BJ (cell line): ENCODE measurements at regions of chr11 and their contacts with region 1.

Region 1: DNA sequence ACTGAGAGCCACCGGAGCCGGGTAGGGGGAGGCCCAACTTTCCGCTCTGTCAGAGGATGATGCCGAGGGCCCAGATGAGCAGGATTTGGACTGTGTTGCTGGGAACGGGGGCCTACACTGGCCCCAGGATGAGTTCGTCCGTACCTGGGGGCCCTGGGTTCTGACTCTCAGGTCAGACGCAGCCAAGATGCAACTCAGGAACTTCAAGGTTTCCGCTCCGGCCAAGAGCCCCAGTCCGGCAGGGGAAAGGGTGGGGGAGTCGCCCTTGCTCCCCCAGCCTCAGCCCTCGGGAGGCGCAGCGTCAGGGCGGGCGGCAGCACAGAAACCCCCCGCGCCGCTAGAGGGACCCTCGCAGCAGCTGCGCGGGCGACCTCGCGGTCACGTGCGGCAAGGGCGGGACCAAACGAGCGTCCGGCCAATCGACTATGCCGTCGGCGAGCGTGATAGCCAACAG is 241 bp upstream of the ARL2 start:
- DNase-seq: no peak
- H3K4me3 ChIP-seq: peak overlapping the region; percentile 93
- H3K27me3 ChIP-seq: no peaks in the 10 kb centered on the region
- CTCF ChIP-seq: peak; percentile 40; the same call in 1 of the 2 replicates

Region 2: GRCh38 chr11:64887757-64888405 is 125.8 kb before region 1 on chr11:
- CTCF ChIA-PET with region 1: interaction called, 23 read pairs
- POLR2A ChIA-PET with region 1: no interaction called
- DNase-seq: no peak
- H3K4me3 ChIP-seq: no peak overlapping the region
- H3K27me3 ChIP-seq: no peaks in the 10 kb centered on the region
- CTCF ChIP-seq: peak; percentile 95

Region 3: GRCh38 chr11:65003282-65003681 is 10.4 kb before region 1 on chr11:
- CTCF ChIA-PET with region 1: interaction called, 30 read pairs
- POLR2A ChIA-PET with region 1: no interaction called
- DNase-seq: no peak
- H3K4me3 ChIP-seq: no peak overlapping the region
- H3K27me3 ChIP-seq: no peaks in the 10 kb centered on the region
- CTCF ChIP-seq: no peak

Region 4: GRCh38 chr11:65111744-65112414 is 98.2 kb after region 1 on chr11 and contains the start of gene TM7SF2:
- CTCF ChIA-PET with region 1: interaction called, 31 read pairs
- POLR2A ChIA-PET with region 1: no interaction called
- DNase-seq: peak; percentile 49
- H3K4me3 ChIP-seq: peak within 1 kb of the TSS; percentile 44
- H3K27me3 ChIP-seq: no peaks in the 10 kb centered on the region
- CTCF ChIP-seq: no peak
- polyA plus RNA-seq, gene TM7SF2: 5.0 and 8.2 TPM in 2 replicates

Region 5: GRCh38 chr11:65448418-65449105 is 434.8 kb after region 1 on chr11:
- CTCF ChIA-PET with region 1: no interaction called
- POLR2A ChIA-PET with region 1: interaction called, 11 read pairs
- DNase-seq: no peak
- H3K4me3 ChIP-seq: no peak overlapping the region
- H3K27me3 ChIP-seq: no peaks in the 10 kb centered on the region
- CTCF ChIP-seq: no peak